Caco-2 (cell line): ENCODE measurements at regions of chr12 and their contacts with region 1.

Region 1: GRCh38 chr12:89907659-89908058 is 199.0 kb upstream of the ATP2B1 start:
- DNase-seq: no peak
- H3K4me3 ChIP-seq: no peak overlapping the region
- H3K4me3 Mint-ChIP-seq: no peak overlapping the region
- H3K27ac Mint-ChIP-seq: no peak overlapping the region
- H3K4me1 ChIP-seq: no peaks in the 10 kb centered on the region
- H3K4me1 Mint-ChIP-seq: peaks cover 10% of the 10 kb centered on the region
- H3K27me3 ChIP-seq: no peaks in the 10 kb centered on the region
- H3K27me3 Mint-ChIP-seq: no peaks in the 10 kb centered on the region
- CTCF ChIP-seq: no peak

Region 2: DNA sequence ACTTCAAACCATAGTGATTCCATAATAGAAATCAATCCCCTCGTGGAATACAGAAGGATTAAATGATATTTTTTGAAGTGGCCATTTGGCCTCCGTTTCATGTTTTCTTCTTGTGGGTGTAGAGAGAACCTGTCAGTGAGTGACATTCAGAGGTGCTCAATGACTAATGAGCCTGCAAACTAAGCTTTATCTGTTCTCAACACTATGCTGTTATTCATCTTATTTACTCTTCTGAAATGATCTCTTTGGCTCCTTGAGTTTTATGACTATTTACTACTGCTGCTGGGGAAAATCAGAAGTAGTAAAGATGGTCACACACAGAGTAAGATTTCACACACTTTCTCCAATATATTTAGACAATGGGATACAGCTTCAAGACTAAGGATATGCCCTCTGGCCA is 229.4 kb before region 1 on chr12:
- CTCF ChIA-PET with region 1: no interaction called
- POLR2A ChIA-PET with region 1: no interaction called
- intact Hi-C with region 1: no loop called
- DNase-seq: no peak
- H3K4me3 ChIP-seq: no peak overlapping the region
- H3K4me3 Mint-ChIP-seq: no peak overlapping the region
- H3K27ac Mint-ChIP-seq: no peak overlapping the region
- H3K4me1 ChIP-seq: peaks cover 16% of the 10 kb centered on the region
- H3K4me1 Mint-ChIP-seq: peaks cover 21% of the 10 kb centered on the region
- H3K27me3 ChIP-seq: no peaks in the 10 kb centered on the region
- H3K27me3 Mint-ChIP-seq: no peaks in the 10 kb centered on the region
- CTCF ChIP-seq: no peak

Region 3: GRCh38 chr12:89840162-89840922 is 67.3 kb before region 1 on chr12:
- CTCF ChIA-PET with region 1: no interaction called
- POLR2A ChIA-PET with region 1: no interaction called
- intact Hi-C with region 1: no loop called
- DNase-seq: no peak
- H3K4me3 ChIP-seq: no peak overlapping the region
- H3K4me3 Mint-ChIP-seq: no peak overlapping the region
- H3K27ac Mint-ChIP-seq: no peak overlapping the region
- H3K4me1 ChIP-seq: peaks cover 11% of the 10 kb centered on the region; the same call in 1 of the 2 replicates
- H3K4me1 Mint-ChIP-seq: peaks cover 13% of the 10 kb centered on the region
- H3K27me3 ChIP-seq: no peaks in the 10 kb centered on the region
- H3K27me3 Mint-ChIP-seq: no peaks in the 10 kb centered on the region
- CTCF ChIP-seq: no peak

Region 4: GRCh38 chr12:89883630-89884389 is 23.8 kb before region 1 on chr12:
- CTCF ChIA-PET with region 1: no interaction called
- POLR2A ChIA-PET with region 1: no interaction called
- intact Hi-C with region 1: loop called (anchors 2 kb)
- DNase-seq: no peak
- H3K4me3 ChIP-seq: no peak overlapping the region
- H3K4me3 Mint-ChIP-seq: no peak overlapping the region
- H3K27ac Mint-ChIP-seq: no peak overlapping the region
- H3K4me1 ChIP-seq: no peaks in the 10 kb centered on the region
- H3K4me1 Mint-ChIP-seq: no peaks in the 10 kb centered on the region
- H3K27me3 ChIP-seq: no peaks in the 10 kb centered on the region
- H3K27me3 Mint-ChIP-seq: no peaks in the 10 kb centered on the region
- CTCF ChIP-seq: no peak